HepG2 (cell line): ENCODE measurements at regions of chr19 and their contacts with region 1.

Region 1: GRCh38 chr19:4638828-4639530 is at the start of gene TNFAIP8L1:
- DNase-seq: peak; percentile 89
- ATAC-seq: peak; percentile 53
- H3K4me3 ChIP-seq: peak within 1 kb of the TSS; percentile 80 to 99 (median 98)
- H3K27ac ChIP-seq: peak within 1 kb of the TSS; percentile 90
- H3K4me1 ChIP-seq: peaks cover 50% of the 10 kb centered on the region
- H3K27me3 ChIP-seq: no peaks in the 10 kb centered on the region; a peak in 1 of 5 replicates
- CTCF ChIP-seq: no peak
- EP300 ChIP-seq: no peak
- POLR2A ChIP-seq: peak in 1 of 2 experiments; percentile 42; a peak in 1 of 4 replicates
- RAD21 ChIP-seq: no peak
- total RNA-seq, gene TNFAIP8L1: 18.9 and 21.4 TPM in 2 replicates

Region 2: DNA sequence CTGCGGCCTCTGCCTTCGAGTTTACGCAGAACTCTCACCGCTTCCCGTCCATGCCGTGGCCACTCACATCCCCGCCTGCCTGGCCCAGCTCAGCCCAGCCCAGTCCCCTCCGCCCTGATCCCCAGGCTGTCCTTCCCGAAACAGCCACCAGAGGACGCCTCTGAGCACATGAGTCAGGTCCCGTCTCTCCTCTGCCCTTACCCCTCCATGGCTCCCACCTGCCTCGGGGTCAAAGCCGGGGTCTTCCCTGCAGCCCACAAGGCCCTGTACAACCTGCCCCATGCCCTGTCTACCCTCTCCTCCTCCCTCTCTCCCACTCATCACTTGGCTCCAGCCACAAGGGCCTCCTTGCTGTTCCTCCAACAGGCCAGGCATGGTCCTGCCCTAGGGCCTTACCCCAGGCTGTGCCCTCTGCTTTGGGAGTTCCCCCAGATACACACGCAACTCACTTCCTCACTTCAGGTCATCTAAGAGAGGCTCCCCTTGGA is 71.4 kb before region 1 on chr19:
- CTCF ChIA-PET with region 1: interaction called, 13 read pairs
- POLR2A ChIA-PET with region 1: interaction called, 4 read pairs
- in situ Hi-C with region 1: no loop called
- intact Hi-C with region 1: no loop called
- DNase-seq: peak; percentile 40
- ATAC-seq: peak; percentile 84
- H3K4me3 ChIP-seq: no peak overlapping the region
- H3K27ac ChIP-seq: no peak overlapping the region
- H3K4me1 ChIP-seq: no peaks in the 10 kb centered on the region
- H3K27me3 ChIP-seq: no peaks in the 10 kb centered on the region
- CTCF ChIP-seq: peak; percentile 93
- EP300 ChIP-seq: no peak
- POLR2A ChIP-seq: no peak
- RAD21 ChIP-seq: peak; percentile 78

Region 3: GRCh38 chr19:4576016-4576933 is 62.7 kb before region 1 on chr19:
- CTCF ChIA-PET with region 1: interaction called, 25 read pairs
- POLR2A ChIA-PET with region 1: interaction called, 7 read pairs
- in situ Hi-C with region 1: loop called (anchors 5 kb)
- intact Hi-C with region 1: no loop called
- DNase-seq: peak; percentile 61
- ATAC-seq: peak; percentile 47
- H3K4me3 ChIP-seq: no peak overlapping the region
- H3K27ac ChIP-seq: peak overlapping the region; percentile 29
- H3K4me1 ChIP-seq: peaks cover 53% of the 10 kb centered on the region
- H3K27me3 ChIP-seq: no peaks in the 10 kb centered on the region
- CTCF ChIP-seq: peak; percentile 88
- EP300 ChIP-seq: 0 out of 4 replicates have a peak, but pooled peaks of 1 of the 2 experiments have one; percentile 11
- POLR2A ChIP-seq: 0 out of 4 replicates have a peak, but pooled peaks of 1 of the 2 experiments have one; percentile 27
- RAD21 ChIP-seq: peak; percentile 86

Region 4: GRCh38 chr19:4589579-4590410 is 49.2 kb before region 1 on chr19:
- CTCF ChIA-PET with region 1: interaction called, 9 read pairs
- POLR2A ChIA-PET with region 1: no interaction called
- in situ Hi-C with region 1: no loop called
- intact Hi-C with region 1: loop called (anchors 2 kb)
- DNase-seq: peak; percentile 65
- ATAC-seq: peak; percentile 87
- H3K4me3 ChIP-seq: peak overlapping the region in 1 of 3 experiments; percentile 26; a peak in 2 of 6 replicates
- H3K27ac ChIP-seq: no peak overlapping the region
- H3K4me1 ChIP-seq: peaks cover 68% of the 10 kb centered on the region
- H3K27me3 ChIP-seq: peaks cover 1 to 7% of the 10 kb centered on the region in 2 experiments; a peak in 2 of 5 replicates
- CTCF ChIP-seq: peak; percentile 90
- EP300 ChIP-seq: no peak
- POLR2A ChIP-seq: no peak
- RAD21 ChIP-seq: peak; percentile 73